Heart right ventricle (tissue), 16 donors: ENCODE measurements at regions of chr7 and their contacts with region 1.

Region 1: DNA sequence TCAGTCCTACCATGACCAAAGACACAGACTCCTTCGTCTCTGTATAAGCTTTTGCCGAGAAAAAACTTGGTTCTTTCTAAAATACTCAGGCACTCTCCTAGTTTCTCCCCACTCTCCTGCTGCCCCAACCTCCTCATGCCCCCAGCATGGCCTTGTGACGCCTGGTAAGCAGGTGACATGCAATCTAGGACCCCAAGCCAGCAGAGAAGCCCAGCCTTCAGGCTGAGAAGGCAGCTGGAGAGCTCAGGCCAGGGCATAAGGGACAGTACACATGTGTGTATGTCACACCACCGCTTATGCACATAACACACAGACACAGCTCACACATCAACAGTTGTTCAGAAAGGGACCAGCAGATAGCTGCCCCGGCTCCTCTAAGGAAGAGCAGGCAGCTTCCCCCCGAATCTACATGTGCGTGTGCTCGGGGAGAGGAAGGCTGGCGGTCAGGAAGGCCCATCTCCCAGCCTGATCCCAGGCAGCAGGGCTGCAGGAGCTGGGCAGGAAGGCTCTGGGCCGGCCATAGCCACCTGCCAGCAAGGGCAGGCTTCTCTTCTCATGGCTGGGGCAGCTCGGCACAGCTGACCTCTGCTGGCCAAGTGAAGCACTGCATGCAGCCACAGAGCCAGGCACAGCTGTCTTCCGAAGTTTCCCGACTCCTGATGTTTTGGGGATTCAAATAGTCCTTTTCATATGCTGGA is 8.5 kb downstream of the DDX56 start:
- DNase-seq: peak; percentile 44 to 72
- ATAC-seq: peak; percentile 74 to 92 (median 88)
- H3K4me3 ChIP-seq: no peak overlapping the region
- H3K27ac ChIP-seq: peak overlapping the region in 5 of 10 donors; percentile 1 to 53 (median 15)
- H3K4me1 ChIP-seq: peaks cover 0 to 14% (median 0%) of the 10 kb centered on the region in 9 donors
- H3K27me3 ChIP-seq: no peaks in the 10 kb centered on the region
- CTCF ChIP-seq: peak; percentile 91 to 100 (median 97)

Region 2: DNA sequence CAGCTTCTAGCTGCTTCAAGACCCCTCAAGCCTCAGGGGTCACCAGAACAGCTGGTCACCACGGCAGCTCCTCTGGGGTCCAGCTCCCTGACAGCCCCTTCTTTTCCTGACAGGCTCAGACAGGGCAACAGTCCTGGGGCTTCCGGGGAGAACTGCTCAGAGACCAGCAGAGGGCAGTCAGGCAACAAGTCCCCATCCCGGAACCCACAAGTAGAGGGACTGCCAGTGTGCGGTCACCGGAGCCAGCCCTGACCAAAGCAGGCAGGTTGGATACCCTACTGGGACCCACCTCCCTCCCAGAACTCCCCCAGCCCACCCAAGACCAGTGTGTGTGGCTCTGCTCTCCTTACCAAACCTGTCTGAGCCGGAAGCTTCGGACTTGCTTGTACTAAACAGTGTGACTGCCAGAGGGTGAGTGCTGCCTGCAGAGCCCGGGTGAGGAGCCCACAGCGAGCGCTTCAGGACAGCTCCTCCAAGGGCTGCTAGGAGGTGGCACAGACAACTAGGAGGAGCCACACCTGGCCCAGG is 324.2 kb before region 1 on chr7:
- intact Hi-C with region 1: loop called (anchors 2 to 10 kb)
- DNase-seq: peak; percentile 65 to 70
- ATAC-seq: peak; percentile 72 to 88 (median 83)
- H3K4me3 ChIP-seq: no peak overlapping the region
- H3K27ac ChIP-seq: no peak overlapping the region
- H3K4me1 ChIP-seq: peaks cover 0 to 16% (median 5%) of the 10 kb centered on the region in 9 donors
- H3K27me3 ChIP-seq: no peaks in the 10 kb centered on the region
- CTCF ChIP-seq: peak; percentile 49 to 79 (median 72)

Region 3: GRCh38 chr7:44348300-44348699 is 216.9 kb before region 1 on chr7:
- intact Hi-C with region 1: loop called in 1 of 10 experiments (anchors 10 kb)
- DNase-seq: no peak
- ATAC-seq: peak in 6 of 8 donors; percentile 13 to 47 (median 30)
- H3K4me3 ChIP-seq: no peak overlapping the region
- H3K27ac ChIP-seq: peak overlapping the region in 1 of 10 donors; percentile 51
- H3K4me1 ChIP-seq: peaks cover 0 to 20% (median 0%) of the 10 kb centered on the region in 9 donors
- H3K27me3 ChIP-seq: peaks cover 0 to 4% (median 0%) of the 10 kb centered on the region in 7 donors
- CTCF ChIP-seq: peak in 4 of 9 donors; percentile 8 to 26 (median 16)

Region 4: GRCh38 chr7:44489955-44490350 is 75.3 kb before region 1 on chr7:
- intact Hi-C with region 1: loop called in 2 of 10 experiments (anchors 5 to 10 kb)
- DNase-seq: no peak
- ATAC-seq: peak; percentile 1 to 50 (median 16)
- H3K4me3 ChIP-seq: peak overlapping the region; percentile 80 to 92 (median 85)
- H3K27ac ChIP-seq: peak overlapping the region; percentile 95 to 100 (median 98)
- H3K4me1 ChIP-seq: peaks cover 0 to 54% (median 47%) of the 10 kb centered on the region in 9 donors
- H3K27me3 ChIP-seq: peaks cover 0 to 7% (median 0%) of the 10 kb centered on the region in 7 donors
- CTCF ChIP-seq: no peak